Activated CD8-positive, alpha-beta T cell treated with anti-CD3 and anti-CD28 coated beads, Interleukin-2, amount 10 ng/mL, durations not matched to agents 7 days and 5 days (primary cell): ENCODE measurements at regions of chr16 and their contacts with region 1.

Region 1: GRCh38 chr16:4307215-4308037 is 8.4 kb upstream of the GLIS2 start:
- DNase-seq: peak; percentile 97
- ATAC-seq: peak; percentile 96
- H3K4me3 Mint-ChIP-seq: peak overlapping the region; percentile 98
- H3K27ac Mint-ChIP-seq: peak overlapping the region; percentile 98
- H3K4me1 Mint-ChIP-seq: peaks cover 43% of the 10 kb centered on the region
- H3K27me3 Mint-ChIP-seq: no peaks in the 10 kb centered on the region

Region 2: DNA sequence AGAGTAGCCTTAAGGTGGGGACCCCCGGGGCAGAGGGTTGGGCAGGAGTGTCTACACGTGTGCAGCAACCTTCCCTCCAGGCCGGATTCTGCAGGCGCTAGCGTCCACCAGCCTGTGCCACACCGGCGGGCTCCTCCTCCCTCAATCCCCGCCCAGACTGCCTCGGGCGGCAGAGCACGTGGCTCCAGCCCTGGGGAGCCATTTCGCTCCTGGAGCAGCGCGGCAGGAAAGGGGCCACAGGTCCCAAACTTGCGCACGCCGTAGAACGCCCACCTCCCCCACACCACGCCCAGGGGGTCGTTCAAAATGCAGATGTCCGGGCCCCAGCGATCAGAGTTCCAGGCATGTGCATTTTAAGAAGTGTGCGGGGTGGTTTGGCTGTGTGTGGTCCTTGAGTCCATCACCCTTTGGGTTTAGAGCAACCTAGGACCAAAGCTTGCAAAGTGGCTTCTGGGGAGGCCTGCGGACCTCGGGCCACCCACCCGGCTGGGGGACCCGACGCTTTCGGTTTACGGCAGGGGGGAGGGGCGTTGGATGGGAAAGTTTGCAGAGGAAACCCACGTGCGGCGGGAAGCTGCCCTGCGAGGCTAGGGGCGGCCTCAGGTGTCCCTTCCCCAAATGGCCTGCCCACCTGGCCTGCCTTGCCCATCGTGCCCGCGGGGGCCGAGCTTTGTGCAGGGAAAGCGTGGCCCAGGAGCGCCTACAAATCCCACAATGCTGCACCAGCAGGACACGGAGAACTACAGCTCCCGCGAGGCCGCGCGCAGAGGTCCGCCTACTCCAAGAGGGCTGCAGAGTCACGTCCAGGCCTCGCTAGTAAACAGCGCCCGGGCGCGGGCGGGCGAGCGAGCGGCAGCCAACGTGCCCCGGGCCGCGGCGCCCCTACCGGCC is 36.0 kb before region 1 on chr16:
- CTCF ChIA-PET with region 1: interaction called, 22 read pairs
- POLR2A ChIA-PET with region 1: interaction called, 8 read pairs
- DNase-seq: peak; percentile 94
- ATAC-seq: peak; percentile 86
- H3K4me3 Mint-ChIP-seq: peak overlapping the region; percentile 84
- H3K27ac Mint-ChIP-seq: peak overlapping the region; percentile 95
- H3K4me1 Mint-ChIP-seq: peaks cover 19% of the 10 kb centered on the region
- H3K27me3 Mint-ChIP-seq: no peaks in the 10 kb centered on the region

Region 3: DNA sequence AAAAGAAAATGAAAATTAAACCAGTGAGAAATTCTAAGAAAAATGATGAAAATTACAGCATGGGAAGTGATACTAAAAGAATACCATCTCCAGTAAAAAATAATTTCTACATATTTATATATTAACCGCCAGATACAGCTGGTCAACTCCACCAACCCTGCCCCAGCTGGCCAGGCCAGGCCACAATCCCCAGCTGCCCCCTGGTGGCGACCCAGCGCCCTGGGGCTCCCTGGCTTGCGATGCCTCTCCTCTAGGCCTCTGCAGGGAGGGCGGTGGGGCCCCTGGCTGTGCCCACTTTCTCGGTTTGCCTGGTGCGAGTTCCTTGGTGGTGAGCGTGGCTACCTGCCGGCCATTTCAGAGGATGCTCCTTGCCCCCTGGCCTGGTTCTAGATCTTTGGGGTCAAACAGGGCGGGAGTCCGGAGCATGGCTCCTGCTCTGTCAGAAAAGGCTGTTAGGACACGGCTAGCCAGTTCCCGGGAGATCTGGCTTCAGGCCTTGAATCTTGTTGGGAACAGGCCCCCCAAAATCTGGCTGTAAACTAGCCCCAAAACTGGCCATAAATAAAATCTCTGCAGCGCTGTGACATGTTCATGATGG is 22.9 kb after region 1 on chr16:
- CTCF ChIA-PET with region 1: interaction called, 30 read pairs
- POLR2A ChIA-PET with region 1: interaction called, 3 read pairs
- DNase-seq: peak; percentile 79
- ATAC-seq: peak; percentile 74
- H3K4me3 Mint-ChIP-seq: no peak overlapping the region
- H3K27ac Mint-ChIP-seq: no peak overlapping the region
- H3K4me1 Mint-ChIP-seq: peaks cover 9% of the 10 kb centered on the region
- H3K27me3 Mint-ChIP-seq: no peaks in the 10 kb centered on the region